HEK293 (cell line): ENCODE measurements at regions of chr6 and their contacts with region 1.

Region 1: GRCh38 chr6:70566751-70567382 is at the start of gene SDHAF4:
- H3K4me3 ChIP-seq: peak within 1 kb of the TSS; percentile 73
- H3K27ac ChIP-seq: peak within 1 kb of the TSS; percentile 83
- H3K4me1 ChIP-seq: no peaks in the 10 kb centered on the region
- CTCF ChIP-seq: peak; percentile 74

Region 2: DNA sequence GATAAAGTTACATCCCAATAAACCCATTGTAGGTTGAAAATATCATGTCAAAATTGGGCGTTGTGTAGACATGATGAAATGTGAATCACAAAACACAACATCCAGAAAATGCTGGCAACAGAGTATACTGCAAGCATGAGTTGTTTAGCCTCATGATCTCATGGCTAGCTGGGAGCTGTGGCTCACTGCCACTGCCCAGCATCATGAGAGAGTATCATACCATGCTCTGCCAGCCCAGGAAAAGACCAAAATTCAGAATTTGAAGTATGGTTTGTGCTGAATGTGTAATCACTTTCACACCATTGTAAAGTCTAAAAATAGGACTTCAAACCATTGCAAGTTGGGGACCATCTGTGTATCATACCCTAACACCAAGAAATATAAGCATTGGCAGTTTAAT is 55.6 kb after region 1 on chr6:
- CTCF ChIA-PET with region 1: no interaction called
- POLR2A ChIA-PET with region 1: no interaction called
- H3K4me3 ChIP-seq: no peak overlapping the region
- H3K27ac ChIP-seq: no peak overlapping the region
- H3K4me1 ChIP-seq: no peaks in the 10 kb centered on the region
- CTCF ChIP-seq: no peak

Region 3: GRCh38 chr6:70667711-70668498 is 101.0 kb after region 1 on chr6 and contains the start of gene SMAP1:
- CTCF ChIA-PET with region 1: no interaction called
- POLR2A ChIA-PET with region 1: interaction called, 13 read pairs
- H3K4me3 ChIP-seq: peak within 1 kb of the TSS; percentile 93
- H3K27ac ChIP-seq: peak within 1 kb of the TSS; percentile 93
- H3K4me1 ChIP-seq: peaks cover 4% of the 10 kb centered on the region
- CTCF ChIP-seq: peak; percentile 22; the same call in 1 of the 2 replicates